ENCODE measurements at regions of chr2 and their contacts with region 1.

Region 1: GRCh38 chr2:48946449-48947048 is 191.0 kb upstream of the LHCGR start:
- DNase-seq: no peak
- H3K4me3 ChIP-seq: no peak overlapping the region
- H3K27ac ChIP-seq: no peak overlapping the region
- H3K4me1 ChIP-seq: peaks cover 12 to 41% (median 28%) of the 10 kb centered on the region in 4 donors
- H3K27me3 ChIP-seq: no peaks in the 10 kb centered on the region
- CTCF ChIP-seq: peak; percentile 89 to 95 (median 91)
- EP300 ChIP-seq: no peak
- POLR2A ChIP-seq: no peak

Region 2: DNA sequence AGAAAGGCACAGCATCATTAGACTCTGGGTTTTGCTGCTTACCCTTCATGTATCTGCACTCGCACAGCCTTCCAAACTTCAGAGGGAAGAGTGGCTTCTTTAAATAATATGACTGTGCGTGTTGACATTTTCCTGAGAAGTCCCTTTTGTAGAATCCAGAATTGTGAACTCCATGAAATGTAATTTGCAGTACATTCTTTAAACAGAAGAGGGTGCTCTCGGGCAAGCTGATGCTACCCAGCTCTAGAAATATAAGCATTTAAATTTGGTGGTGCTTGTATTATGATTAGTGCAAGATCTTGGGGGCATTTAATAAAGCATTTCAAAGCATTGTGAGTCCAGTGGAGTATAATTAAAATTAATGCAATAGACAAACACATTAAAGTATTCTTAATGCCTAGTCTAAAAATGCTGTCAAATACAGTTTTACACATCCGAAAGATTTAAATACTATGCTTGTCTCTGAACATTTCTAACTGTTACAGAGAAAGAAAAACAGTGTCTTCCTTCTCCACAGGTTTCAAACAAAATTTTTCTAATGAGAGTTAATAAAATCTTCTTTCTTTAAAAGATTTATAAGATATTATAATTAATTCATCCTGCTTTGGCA is 346.2 kb before region 1 on chr2:
- intact Hi-C with region 1: loop called (anchors 5 kb)
- DNase-seq: no peak
- H3K4me3 ChIP-seq: no peak overlapping the region
- H3K27ac ChIP-seq: peak overlapping the region in 3 of 4 donors; percentile 5 to 30 (median 29)
- H3K4me1 ChIP-seq: peaks cover 0 to 38% (median 34%) of the 10 kb centered on the region in 4 donors
- H3K27me3 ChIP-seq: no peaks in the 10 kb centered on the region
- CTCF ChIP-seq: peak; percentile 56 to 77 (median 75)
- EP300 ChIP-seq: no peak
- POLR2A ChIP-seq: no peak

Region 3: DNA sequence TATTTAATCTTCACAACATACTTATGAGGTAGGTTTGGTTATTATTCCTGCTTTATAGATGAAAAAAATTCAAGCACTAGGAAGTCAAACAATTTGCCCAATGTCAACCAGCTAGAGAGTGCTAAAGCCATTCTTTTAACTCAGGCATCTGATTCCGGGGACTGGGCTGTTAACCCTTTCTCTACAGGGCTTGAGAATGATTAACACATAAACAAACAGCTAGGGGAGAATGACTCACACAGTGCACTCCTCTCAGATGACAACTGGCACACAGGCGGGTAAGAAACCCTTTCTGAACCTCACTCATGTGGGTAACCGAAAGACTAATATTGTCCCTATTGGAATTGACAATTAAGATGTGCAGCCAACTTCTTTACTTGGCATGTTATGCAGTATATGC is 294.1 kb after region 1 on chr2:
- intact Hi-C with region 1: no loop called
- DNase-seq: no peak
- H3K4me3 ChIP-seq: no peak overlapping the region
- H3K27ac ChIP-seq: no peak overlapping the region
- H3K4me1 ChIP-seq: no peaks in the 10 kb centered on the region
- H3K27me3 ChIP-seq: no peaks in the 10 kb centered on the region
- CTCF ChIP-seq: no peak
- EP300 ChIP-seq: no peak
- POLR2A ChIP-seq: no peak

Region 4: GRCh38 chr2:49490710-49491109 is 544.2 kb after region 1 on chr2:
- intact Hi-C with region 1: loop called (anchors 10 kb)
- DNase-seq: no peak
- H3K4me3 ChIP-seq: no peak overlapping the region
- H3K27ac ChIP-seq: no peak overlapping the region
- H3K4me1 ChIP-seq: no peaks in the 10 kb centered on the region
- H3K27me3 ChIP-seq: no peaks in the 10 kb centered on the region
- CTCF ChIP-seq: peak in 2 of 3 experiments; percentile 23 to 41
- EP300 ChIP-seq: no peak
- POLR2A ChIP-seq: no peak

Region 5: GRCh38 chr2:50401772-50402653 is 1455.5 kb after region 1 on chr2:
- intact Hi-C with region 1: loop called (anchors 5 kb)
- DNase-seq: no peak
- H3K4me3 ChIP-seq: no peak overlapping the region
- H3K27ac ChIP-seq: no peak overlapping the region
- H3K4me1 ChIP-seq: peaks cover 0 to 4% (median 0%) of the 10 kb centered on the region in 4 donors
- H3K27me3 ChIP-seq: no peaks in the 10 kb centered on the region
- CTCF ChIP-seq: peak; percentile 63 to 82 (median 79)
- EP300 ChIP-seq: no peak
- POLR2A ChIP-seq: no peak

Measured in esophagus muscularis mucosa (tissue), 4 donors.